ENCODE measurements at regions of chr20 and their contacts with region 1.

Region 1: GRCh38 chr20:59495894-59496510 is 108.3 kb upstream of the PHACTR3 start:
- DNase-seq: peak; percentile 84
- H3K4me3 ChIP-seq: no peak overlapping the region; a peak in 1 of 4 replicates
- H3K27ac ChIP-seq: no peak overlapping the region; a peak in 1 of 4 replicates
- H3K4me1 ChIP-seq: peaks cover 0 to 7% of the 10 kb centered on the region in 2 experiments; a peak in 1 of 4 replicates
- H3K27me3 ChIP-seq: no peaks in the 10 kb centered on the region
- CTCF ChIP-seq: peak; percentile 90
- EP300 ChIP-seq: no peak
- RAD21 ChIP-seq: peak; percentile 88

Region 2: DNA sequence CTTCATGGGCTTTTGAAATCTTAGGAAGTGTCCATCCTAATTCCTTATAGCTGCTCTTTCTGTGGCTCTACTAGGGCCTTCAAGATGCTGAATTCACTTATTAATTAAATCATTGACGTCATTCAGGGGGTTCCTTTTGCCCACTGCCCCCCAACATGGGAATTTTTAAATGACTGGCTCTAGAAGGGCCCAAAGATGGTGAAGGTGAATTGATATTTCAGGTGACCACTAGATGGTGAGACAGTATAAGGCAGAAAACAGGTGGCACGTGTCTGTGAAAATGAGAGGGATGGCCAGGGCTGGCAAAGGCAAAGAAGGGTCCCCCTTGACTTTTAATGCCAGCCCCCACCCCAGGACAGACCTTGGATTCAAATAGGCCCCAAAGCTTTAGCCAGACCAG is 631.7 kb before region 1 on chr20:
- CTCF ChIA-PET with region 1: interaction called, 19 read pairs
- POLR2A ChIA-PET with region 1: no interaction called
- DNase-seq: peak; percentile 49
- H3K4me3 ChIP-seq: no peak overlapping the region
- H3K27ac ChIP-seq: no peak overlapping the region
- H3K4me1 ChIP-seq: no peaks in the 10 kb centered on the region
- H3K27me3 ChIP-seq: no peaks in the 10 kb centered on the region
- CTCF ChIP-seq: peak; percentile 27
- EP300 ChIP-seq: no peak
- RAD21 ChIP-seq: peak; percentile 77

Region 3: GRCh38 chr20:59253779-59254319 is 242.2 kb before region 1 on chr20:
- CTCF ChIA-PET with region 1: no interaction called
- POLR2A ChIA-PET with region 1: no interaction called
- DNase-seq: peak; percentile 13
- H3K4me3 ChIP-seq: no peak overlapping the region
- H3K27ac ChIP-seq: no peak overlapping the region
- H3K4me1 ChIP-seq: peaks cover 0 to 6% of the 10 kb centered on the region in 2 experiments; a peak in 1 of 4 replicates
- H3K27me3 ChIP-seq: no peaks in the 10 kb centered on the region; the same call in 1 of the 2 replicates
- CTCF ChIP-seq: no peak
- EP300 ChIP-seq: no peak
- RAD21 ChIP-seq: peak; percentile 18; the same call in 1 of the 2 replicates

Region 4: GRCh38 chr20:59412875-59413284 is 83.1 kb before region 1 on chr20:
- CTCF ChIA-PET with region 1: interaction called, 10 read pairs
- POLR2A ChIA-PET with region 1: no interaction called
- DNase-seq: peak; percentile 46
- H3K4me3 ChIP-seq: no peak overlapping the region
- H3K27ac ChIP-seq: peak overlapping the region in 1 of 2 experiments; percentile 80; a peak in 2 of 4 replicates
- H3K4me1 ChIP-seq: peaks cover 0 to 27% of the 10 kb centered on the region in 2 experiments; a peak in 1 of 4 replicates
- H3K27me3 ChIP-seq: 0 out of 2 replicates have a peak, but pooled peaks cover 7% of the 10 kb centered on the region
- CTCF ChIP-seq: no peak
- EP300 ChIP-seq: no peak
- RAD21 ChIP-seq: peak; percentile 64

Region 5: GRCh38 chr20:59463541-59463940 is 32.5 kb before region 1 on chr20:
- CTCF ChIA-PET with region 1: interaction called, 13 read pairs
- POLR2A ChIA-PET with region 1: no interaction called
- DNase-seq: no peak
- H3K4me3 ChIP-seq: no peak overlapping the region
- H3K27ac ChIP-seq: no peak overlapping the region
- H3K4me1 ChIP-seq: peaks cover 0 to 13% of the 10 kb centered on the region in 2 experiments; a peak in 1 of 4 replicates
- H3K27me3 ChIP-seq: no peaks in the 10 kb centered on the region
- CTCF ChIP-seq: no peak
- EP300 ChIP-seq: no peak
- RAD21 ChIP-seq: no peak

Region 6: DNA sequence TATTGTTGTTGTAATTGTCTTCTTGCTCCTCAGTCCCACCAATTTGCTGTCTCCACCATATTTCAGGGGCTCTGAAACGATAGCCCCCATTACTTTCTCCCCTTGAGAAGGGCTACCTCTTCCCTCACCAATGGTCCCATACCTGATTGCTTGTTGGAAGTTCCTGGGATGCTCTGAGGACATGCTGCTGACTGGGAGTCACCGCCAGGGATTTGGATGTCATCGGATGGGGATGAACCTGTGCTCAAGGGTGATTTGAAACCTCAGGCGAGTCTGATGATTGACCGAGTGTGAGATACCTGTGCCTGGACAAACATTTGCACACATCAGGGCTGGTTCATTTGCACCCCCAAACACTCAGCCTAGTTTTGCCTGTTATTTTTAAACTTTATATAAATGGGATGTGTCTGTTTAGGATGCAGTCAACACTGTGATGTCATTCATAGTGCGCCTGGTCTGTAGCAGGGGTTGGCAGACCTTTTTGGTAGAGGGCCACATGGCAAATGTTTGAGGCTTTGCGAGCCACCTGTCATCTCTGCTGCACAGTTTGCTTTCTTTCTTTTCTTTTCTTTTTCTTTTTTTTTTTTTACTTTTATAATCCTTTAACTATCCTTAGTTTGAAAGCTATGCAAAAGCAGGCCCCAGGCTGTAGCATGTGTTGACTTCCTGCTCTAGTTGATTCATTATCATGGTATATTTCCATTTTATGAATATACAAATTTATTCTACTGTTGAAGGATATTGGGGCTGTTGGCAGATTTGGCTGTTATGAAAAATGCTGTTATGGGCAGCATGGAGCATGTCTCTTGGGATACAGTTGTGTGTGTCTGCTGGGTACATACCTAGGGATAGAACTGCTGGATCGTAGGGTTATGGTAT is 10.2 kb before region 1 on chr20:
- CTCF ChIA-PET with region 1: interaction called, 23 read pairs
- POLR2A ChIA-PET with region 1: no interaction called
- DNase-seq: no peak
- H3K4me3 ChIP-seq: no peak overlapping the region
- H3K27ac ChIP-seq: no peak overlapping the region
- H3K4me1 ChIP-seq: peaks cover 0 to 2% of the 10 kb centered on the region in 2 experiments; a peak in 1 of 4 replicates
- H3K27me3 ChIP-seq: no peaks in the 10 kb centered on the region
- CTCF ChIP-seq: no peak
- EP300 ChIP-seq: no peak
- RAD21 ChIP-seq: no peak

Region 7: GRCh38 chr20:59518881-59519688 is 23.1 kb after region 1 on chr20:
- CTCF ChIA-PET with region 1: interaction called, 25 read pairs
- POLR2A ChIA-PET with region 1: no interaction called
- DNase-seq: peak; percentile 73
- H3K4me3 ChIP-seq: no peak overlapping the region
- H3K27ac ChIP-seq: no peak overlapping the region
- H3K4me1 ChIP-seq: peaks cover 0 to 11% of the 10 kb centered on the region in 2 experiments; a peak in 1 of 4 replicates
- H3K27me3 ChIP-seq: no peaks in the 10 kb centered on the region
- CTCF ChIP-seq: peak; percentile 73
- EP300 ChIP-seq: no peak
- RAD21 ChIP-seq: no peak; the same call in 1 of the 2 replicates

Region 8: GRCh38 chr20:59920944-59921343 is 424.9 kb after region 1 on chr20:
- CTCF ChIA-PET with region 1: no interaction called
- POLR2A ChIA-PET with region 1: no interaction called
- DNase-seq: no peak
- H3K4me3 ChIP-seq: no peak overlapping the region
- H3K27ac ChIP-seq: no peak overlapping the region
- H3K4me1 ChIP-seq: no peaks in the 10 kb centered on the region; a peak in 1 of 4 replicates
- H3K27me3 ChIP-seq: no peaks in the 10 kb centered on the region
- CTCF ChIP-seq: no peak
- EP300 ChIP-seq: no peak
- RAD21 ChIP-seq: no peak

Measured in SK-N-SH (cell line).